Lower leg skin (tissue), 4 donors: ENCODE measurements at regions of chr4 and their contacts with region 1.

Region 1: DNA sequence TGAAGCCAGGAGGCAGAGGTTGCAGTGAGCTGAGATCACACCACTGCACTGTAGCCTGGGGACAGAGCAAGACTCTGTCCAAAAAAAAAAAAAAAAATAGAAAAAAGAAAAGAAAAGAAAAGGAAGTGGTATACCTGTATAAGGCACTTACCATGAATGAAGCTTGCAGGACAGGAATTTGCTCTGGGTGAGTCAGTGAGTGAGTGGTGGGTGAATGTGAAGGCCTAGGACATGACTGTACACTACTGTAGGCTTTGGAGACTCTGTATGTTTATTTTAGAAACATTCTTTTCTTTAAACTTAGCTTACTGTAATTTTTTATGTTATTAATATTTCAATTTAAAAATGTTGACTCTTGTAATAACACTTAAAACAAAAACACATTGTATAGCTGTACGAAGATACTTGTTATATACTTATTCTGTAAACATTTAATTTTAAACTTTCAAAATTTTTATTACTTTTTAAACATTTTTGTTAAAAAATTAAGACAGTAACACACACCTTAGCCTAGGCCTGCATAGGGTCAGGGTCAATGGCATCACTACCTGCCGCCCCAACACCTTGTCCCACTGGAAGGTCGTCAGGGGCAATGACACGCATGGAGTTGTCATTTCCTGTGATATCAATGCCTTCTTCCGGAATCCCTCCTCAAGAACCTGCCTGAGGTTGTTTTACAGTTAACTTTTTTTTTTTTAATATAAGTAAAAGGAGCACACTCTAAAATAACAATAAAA is 78.7 kb downstream of the CLNK start:
- DNase-seq: no peak
- H3K4me3 ChIP-seq: no peak overlapping the region
- CTCF ChIP-seq: no peak
- POLR2A ChIP-seq: no peak

Region 2: GRCh38 chr4:10054571-10055041 is 551.3 kb before region 1 on chr4:
- intact Hi-C with region 1: no loop called
- DNase-seq: no peak
- H3K4me3 ChIP-seq: no peak overlapping the region
- CTCF ChIP-seq: no peak
- POLR2A ChIP-seq: no peak

Region 3: GRCh38 chr4:12416755-12417154 is 1810.8 kb after region 1 on chr4:
- intact Hi-C with region 1: loop called (anchors 5 kb)
- DNase-seq: no peak
- H3K4me3 ChIP-seq: no peak overlapping the region
- CTCF ChIP-seq: no peak
- POLR2A ChIP-seq: no peak